ENCODE measurements at regions of chr11 and their contacts with region 1.

Region 1: DNA sequence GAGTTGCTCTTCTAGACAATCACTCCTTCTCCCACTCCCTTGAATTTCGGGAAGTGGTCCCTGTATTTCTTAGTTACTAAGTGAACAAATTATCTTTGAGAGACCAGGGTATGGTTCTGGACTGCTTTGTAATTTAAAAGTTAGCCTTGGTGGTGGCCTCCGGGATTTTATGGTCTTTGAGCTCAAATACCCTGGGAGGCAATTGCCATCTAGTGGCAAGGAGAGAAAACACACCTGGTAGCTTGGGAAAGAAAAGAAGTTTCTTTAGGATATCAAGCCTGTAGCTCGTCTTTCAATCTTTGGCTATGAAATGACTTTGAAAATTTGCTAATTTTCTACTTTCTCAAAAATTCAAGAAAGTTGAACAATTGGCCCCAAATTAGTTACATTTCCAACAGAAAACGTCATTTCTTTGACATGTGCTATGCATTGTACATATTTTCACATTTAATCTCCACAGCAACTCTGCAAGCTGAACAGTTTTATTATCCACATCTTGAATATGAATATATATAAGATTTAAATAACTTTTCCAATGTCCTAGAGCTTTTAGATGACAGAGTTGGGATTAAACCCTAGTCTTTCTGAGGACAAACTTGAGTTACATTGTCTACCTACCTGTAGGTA is 39.1 kb downstream of the MMP27 start:
- H3K4me3 Mint-ChIP-seq: no peak overlapping the region
- H3K27ac Mint-ChIP-seq: no peak overlapping the region
- H3K4me1 Mint-ChIP-seq: peaks cover 5% of the 10 kb centered on the region
- H3K27me3 Mint-ChIP-seq: peaks cover 7% of the 10 kb centered on the region

Region 2: GRCh38 chr11:102287964-102288724 is 378.3 kb before region 1 on chr11:
- intact Hi-C with region 1: loop called (anchors 5 kb)
- H3K4me3 Mint-ChIP-seq: no peak overlapping the region
- H3K27ac Mint-ChIP-seq: no peak overlapping the region
- H3K4me1 Mint-ChIP-seq: peaks cover 46% of the 10 kb centered on the region
- H3K27me3 Mint-ChIP-seq: no peaks in the 10 kb centered on the region

Region 3: GRCh38 chr11:102341844-102342318 is 324.6 kb before region 1 on chr11:
- intact Hi-C with region 1: loop called (anchors 5 kb)
- H3K4me3 Mint-ChIP-seq: no peak overlapping the region
- H3K27ac Mint-ChIP-seq: no peak overlapping the region
- H3K4me1 Mint-ChIP-seq: peaks cover 16% of the 10 kb centered on the region
- H3K27me3 Mint-ChIP-seq: no peaks in the 10 kb centered on the region